Vagina (tissue), 2 donors: ENCODE measurements at regions of chr18 and their contacts with region 1.

Region 1: DNA sequence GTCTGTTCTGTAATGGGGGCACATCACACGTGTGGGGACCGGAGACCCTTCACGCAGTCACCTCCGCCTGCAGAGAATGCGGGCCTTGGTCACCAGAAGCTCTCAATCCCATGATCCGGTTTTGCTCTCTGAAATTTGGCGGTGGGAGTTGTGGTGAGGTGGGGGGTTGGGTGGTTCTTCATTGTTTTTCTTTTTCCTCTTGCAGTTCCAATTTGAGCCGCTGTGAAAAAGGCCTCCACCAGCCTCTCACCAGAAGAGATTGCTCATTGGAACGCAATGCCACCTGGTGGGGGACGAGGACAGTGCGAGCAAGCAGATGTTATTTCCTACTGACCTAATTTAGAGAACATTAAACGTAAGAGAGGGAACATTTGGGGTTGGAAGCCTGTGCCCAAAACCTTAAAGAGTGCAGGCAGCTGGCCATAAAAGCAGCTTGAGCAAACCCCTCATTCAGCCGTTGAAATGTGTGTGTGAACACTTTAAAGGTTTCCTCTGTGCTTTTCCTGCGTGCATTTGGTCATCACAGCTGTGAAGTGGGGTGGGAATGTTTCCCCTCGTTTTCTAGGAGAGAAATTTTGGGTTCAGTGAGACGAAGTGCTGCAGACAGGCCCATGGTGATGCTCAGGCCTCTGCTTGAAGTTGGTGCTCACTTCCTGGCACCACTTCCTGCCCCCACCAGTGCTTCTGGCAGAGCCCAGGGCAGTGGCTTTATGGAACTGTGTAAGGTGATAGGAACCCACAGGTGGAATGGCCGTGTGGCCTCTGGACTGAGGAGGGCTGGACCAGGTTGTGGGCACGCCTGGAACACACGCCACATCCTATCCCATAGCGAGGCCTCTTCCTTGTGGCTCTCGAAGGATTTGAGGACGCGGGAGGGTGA is 61.7 kb downstream of the ZCCHC2 start:
- DNase-seq: peak in 1 of 2 donors; percentile 93
- H3K4me3 ChIP-seq: no peak overlapping the region
- H3K27ac ChIP-seq: peak overlapping the region; percentile 70
- H3K4me1 ChIP-seq: peaks cover 15% of the 10 kb centered on the region
- H3K27me3 ChIP-seq: no peaks in the 10 kb centered on the region
- CTCF ChIP-seq: peak; percentile 97 to 99 (median 98)
- POLR2A ChIP-seq: no peak

Region 2: DNA sequence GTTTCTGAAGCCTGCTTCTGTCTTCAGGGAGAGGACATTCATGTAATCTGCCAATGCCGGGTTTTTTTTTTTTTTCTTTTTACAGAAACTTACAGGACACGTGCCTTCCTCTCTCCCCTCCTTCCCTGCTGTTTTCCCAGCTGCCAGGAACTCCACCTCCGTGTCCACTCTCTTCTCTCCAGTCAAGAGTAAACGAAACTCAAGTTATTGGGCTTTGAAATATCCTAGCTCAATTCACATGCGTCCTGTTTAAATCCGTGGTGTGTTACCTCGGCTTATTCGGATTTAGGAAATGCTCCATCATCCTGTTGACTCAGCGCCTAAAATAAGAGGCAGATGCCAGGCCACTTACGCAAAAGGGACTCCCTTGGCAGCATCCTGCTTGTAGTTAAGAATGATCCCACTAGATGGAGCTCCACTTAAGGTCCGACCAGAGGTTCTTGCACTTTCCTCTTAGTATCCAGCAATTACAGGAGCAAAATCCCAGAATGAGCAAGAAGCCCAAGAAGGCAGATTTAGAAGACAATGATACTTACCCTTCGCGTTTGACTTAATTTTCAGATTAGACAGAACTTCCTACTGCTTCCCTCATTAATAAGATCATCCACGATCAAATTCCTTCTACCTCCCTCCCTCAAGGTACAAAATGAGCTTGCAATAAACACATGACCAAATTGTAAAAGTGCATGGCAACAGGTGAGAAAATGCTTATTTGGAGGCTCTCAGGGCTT is 158.9 kb before region 1 on chr18:
- intact Hi-C with region 1: loop called (anchors 5 kb)
- DNase-seq: peak in 1 of 2 donors; percentile 95
- H3K4me3 ChIP-seq: peak overlapping the region; percentile 29 to 34
- H3K27ac ChIP-seq: peak overlapping the region; percentile 87
- H3K4me1 ChIP-seq: peaks cover 8% of the 10 kb centered on the region
- H3K27me3 ChIP-seq: no peaks in the 10 kb centered on the region
- CTCF ChIP-seq: peak; percentile 66 to 89 (median 71)
- POLR2A ChIP-seq: no peak

Region 3: DNA sequence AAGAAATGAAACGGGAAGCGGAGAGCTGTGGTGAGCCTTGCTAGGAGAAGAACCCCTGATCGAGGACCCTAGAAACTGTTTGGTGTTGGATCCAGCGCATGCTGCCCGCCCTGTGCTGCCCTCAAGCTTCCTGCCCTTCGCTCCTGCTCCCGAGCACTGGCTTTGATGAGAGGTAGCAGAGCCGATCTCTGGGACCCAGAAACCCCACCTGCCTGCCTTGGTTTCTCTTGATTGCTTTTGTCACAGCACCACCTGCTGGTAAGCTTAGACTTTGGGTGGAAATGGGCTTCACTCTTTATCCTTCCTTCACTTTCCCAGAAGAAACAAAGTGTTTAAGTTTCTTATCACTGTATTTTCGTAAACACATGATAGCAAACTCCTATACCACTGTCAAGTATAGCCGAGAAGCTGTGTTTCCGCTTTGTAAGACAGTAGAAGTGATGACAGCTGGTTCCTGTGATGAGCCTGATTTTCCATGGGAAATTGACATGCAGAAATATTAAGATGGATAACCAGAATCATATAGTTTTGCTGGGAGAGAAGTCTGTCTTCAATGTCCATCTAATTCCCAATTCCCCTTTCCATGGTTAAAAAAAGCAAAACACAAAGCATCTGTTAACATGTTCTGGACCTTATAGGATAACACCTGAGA is 398.2 kb after region 1 on chr18:
- intact Hi-C with region 1: loop called (anchors 5 kb)
- DNase-seq: no peak
- H3K4me3 ChIP-seq: peak overlapping the region; percentile 4 to 28
- H3K27ac ChIP-seq: no peak overlapping the region
- H3K4me1 ChIP-seq: no peaks in the 10 kb centered on the region
- H3K27me3 ChIP-seq: no peaks in the 10 kb centered on the region
- CTCF ChIP-seq: peak; percentile 60 to 79 (median 72)
- POLR2A ChIP-seq: no peak